ENCODE measurements at regions of chr9 and their contacts with region 1.

Region 1: GRCh38 chr9:3441197-3441816 is 84.5 kb downstream of the RFX3 start:
- DNase-seq: peak; percentile 76
- H3K4me3 Mint-ChIP-seq: no peak overlapping the region
- H3K27ac Mint-ChIP-seq: no peak overlapping the region
- H3K4me1 Mint-ChIP-seq: peaks cover 9% of the 10 kb centered on the region
- H3K27me3 Mint-ChIP-seq: no peaks in the 10 kb centered on the region

Region 2: GRCh38 chr9:2857564-2858198 is 583.6 kb before region 1 on chr9:
- CTCF ChIA-PET with region 1: interaction called, 5 read pairs
- intact Hi-C with region 1: loop called (anchors 5 kb)
- DNase-seq: peak; percentile 84
- H3K4me3 Mint-ChIP-seq: no peak overlapping the region
- H3K27ac Mint-ChIP-seq: no peak overlapping the region
- H3K4me1 Mint-ChIP-seq: peaks cover 6% of the 10 kb centered on the region
- H3K27me3 Mint-ChIP-seq: peaks cover 18% of the 10 kb centered on the region

Region 3: GRCh38 chr9:2872257-2872935 is 568.9 kb before region 1 on chr9:
- CTCF ChIA-PET with region 1: no interaction called
- intact Hi-C with region 1: loop called (anchors 5 kb)
- DNase-seq: peak; percentile 16
- H3K4me3 Mint-ChIP-seq: no peak overlapping the region
- H3K27ac Mint-ChIP-seq: no peak overlapping the region
- H3K4me1 Mint-ChIP-seq: peaks cover 18% of the 10 kb centered on the region
- H3K27me3 Mint-ChIP-seq: no peaks in the 10 kb centered on the region

Region 4: DNA sequence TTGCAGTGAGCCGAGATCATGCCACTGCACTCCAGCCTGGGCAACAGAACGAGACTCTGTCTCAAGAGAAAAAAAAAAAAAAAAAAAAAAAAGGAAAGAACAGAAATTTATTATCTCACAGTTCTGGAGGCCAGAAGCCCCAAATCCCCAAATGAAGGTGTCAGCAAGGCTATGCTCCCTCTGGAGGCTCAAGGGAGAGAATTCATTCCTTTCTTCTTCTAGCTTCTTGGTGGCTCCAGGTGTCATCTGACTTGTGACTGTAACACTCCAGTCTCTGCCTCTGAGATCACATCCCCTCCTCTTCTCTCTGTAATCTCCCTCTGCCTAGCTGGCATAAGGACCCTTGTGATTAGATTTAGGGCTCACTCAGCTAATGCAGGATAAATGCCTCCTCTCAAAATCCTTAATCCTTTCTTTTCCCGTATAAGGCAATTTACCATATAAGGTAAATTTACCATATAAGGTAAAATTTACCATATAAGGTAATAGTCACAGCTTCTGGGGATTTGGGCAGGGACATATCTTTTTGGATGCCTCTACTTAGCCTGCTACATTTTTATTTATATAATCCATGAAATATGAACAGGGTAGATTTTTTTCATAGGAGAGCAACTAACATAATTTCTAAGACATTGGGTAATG is 279.5 kb before region 1 on chr9:
- CTCF ChIA-PET with region 1: no interaction called
- intact Hi-C with region 1: no loop called
- DNase-seq: no peak
- H3K4me3 Mint-ChIP-seq: no peak overlapping the region
- H3K27ac Mint-ChIP-seq: no peak overlapping the region
- H3K4me1 Mint-ChIP-seq: no peaks in the 10 kb centered on the region
- H3K27me3 Mint-ChIP-seq: peaks cover 11% of the 10 kb centered on the region

Region 5: DNA sequence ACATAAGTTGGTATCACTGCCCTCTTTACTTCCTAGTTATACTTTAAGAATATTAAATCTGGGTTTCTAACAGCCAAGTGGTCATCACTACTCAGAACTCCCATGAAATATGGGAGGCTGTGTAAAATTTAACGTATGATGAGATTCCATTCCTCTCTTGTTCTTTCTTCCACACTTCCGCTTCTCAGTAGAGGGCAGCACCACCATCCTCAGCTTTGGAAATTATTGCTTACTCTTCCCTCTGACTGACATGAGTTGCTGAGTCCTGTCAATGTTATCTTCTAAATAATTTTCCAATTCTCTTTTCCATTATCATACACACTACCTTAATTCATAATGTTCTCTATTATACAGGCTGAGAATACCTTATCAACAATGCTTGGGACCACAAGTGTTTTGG is 109.5 kb before region 1 on chr9:
- CTCF ChIA-PET with region 1: interaction called, 39 read pairs
- intact Hi-C with region 1: loop called (anchors 1 kb)
- DNase-seq: peak; percentile 49
- H3K4me3 Mint-ChIP-seq: no peak overlapping the region
- H3K27ac Mint-ChIP-seq: no peak overlapping the region
- H3K4me1 Mint-ChIP-seq: peaks cover 1% of the 10 kb centered on the region
- H3K27me3 Mint-ChIP-seq: no peaks in the 10 kb centered on the region

Region 6: DNA sequence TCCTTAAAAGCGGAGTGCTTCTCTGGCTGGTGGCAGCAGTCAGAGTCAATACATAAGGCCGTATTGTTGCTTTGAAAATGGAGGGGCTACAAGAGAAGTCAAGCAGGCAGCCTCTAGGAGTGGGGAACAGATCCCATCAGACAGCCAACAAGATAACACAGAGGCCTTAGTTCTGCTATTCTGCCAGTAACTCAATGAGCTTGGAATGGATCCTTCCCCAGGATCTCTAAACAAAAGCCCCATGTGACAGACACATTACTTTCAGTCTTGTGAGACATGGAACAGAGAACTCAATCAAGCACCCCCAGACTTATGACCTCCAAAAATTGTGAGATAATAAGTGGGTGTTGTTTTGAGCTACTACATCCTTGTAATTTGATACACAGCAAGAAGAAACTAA is 74.1 kb before region 1 on chr9:
- CTCF ChIA-PET with region 1: no interaction called
- intact Hi-C with region 1: no loop called
- DNase-seq: no peak
- H3K4me3 Mint-ChIP-seq: no peak overlapping the region
- H3K27ac Mint-ChIP-seq: no peak overlapping the region
- H3K4me1 Mint-ChIP-seq: peaks cover 20% of the 10 kb centered on the region
- H3K27me3 Mint-ChIP-seq: no peaks in the 10 kb centered on the region

Region 7: DNA sequence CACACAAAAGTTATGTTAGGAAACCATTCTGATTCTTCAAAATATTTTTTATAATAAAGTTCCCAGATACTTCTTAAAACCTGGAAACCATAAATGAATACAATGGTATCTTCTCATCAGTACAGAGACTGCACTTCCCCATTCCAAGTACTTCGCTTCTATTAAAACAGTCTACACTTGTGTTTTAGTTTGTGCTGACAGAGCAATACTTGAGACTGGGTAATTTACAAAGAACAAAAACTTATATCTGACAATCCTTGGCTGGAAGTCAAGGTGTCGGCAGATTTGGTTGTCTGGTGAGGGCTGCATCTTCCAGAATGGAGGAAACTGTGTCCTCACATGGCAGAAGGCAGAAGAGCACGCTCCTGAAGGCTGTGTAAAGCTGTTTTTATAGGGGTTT is 14.4 kb after region 1 on chr9:
- CTCF ChIA-PET with region 1: interaction called, 10 read pairs
- intact Hi-C with region 1: no loop called
- DNase-seq: no peak
- H3K4me3 Mint-ChIP-seq: no peak overlapping the region
- H3K27ac Mint-ChIP-seq: no peak overlapping the region
- H3K4me1 Mint-ChIP-seq: peaks cover 3% of the 10 kb centered on the region
- H3K27me3 Mint-ChIP-seq: no peaks in the 10 kb centered on the region

Region 8: DNA sequence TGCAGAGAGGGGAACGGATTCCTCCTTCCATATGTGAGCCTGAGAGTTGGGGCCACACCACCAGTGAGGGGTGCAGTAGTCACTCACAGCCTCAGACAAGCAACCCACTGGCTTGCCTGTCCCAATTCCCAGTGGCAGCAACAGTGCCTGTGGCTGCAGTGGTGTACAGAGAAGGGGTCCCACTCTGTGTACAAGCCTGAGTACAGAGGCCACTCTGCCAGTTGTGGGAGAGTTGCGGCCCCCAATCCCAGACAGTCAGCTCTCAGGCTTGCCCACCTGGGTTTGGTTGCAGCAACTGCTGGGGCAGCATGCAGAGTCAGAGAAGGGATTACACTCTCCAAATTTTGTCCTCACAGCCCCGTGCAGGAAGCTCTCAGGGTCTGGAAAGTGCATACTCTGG is 217.7 kb after region 1 on chr9:
- CTCF ChIA-PET with region 1: no interaction called
- intact Hi-C with region 1: no loop called
- DNase-seq: no peak
- H3K4me3 Mint-ChIP-seq: no peak overlapping the region
- H3K27ac Mint-ChIP-seq: no peak overlapping the region
- H3K4me1 Mint-ChIP-seq: no peaks in the 10 kb centered on the region
- H3K27me3 Mint-ChIP-seq: no peaks in the 10 kb centered on the region

Region 9: GRCh38 chr9:3948826-3949556 is 507.7 kb after region 1 on chr9:
- CTCF ChIA-PET with region 1: no interaction called
- intact Hi-C with region 1: no loop called
- DNase-seq: no peak
- H3K4me3 Mint-ChIP-seq: no peak overlapping the region
- H3K27ac Mint-ChIP-seq: no peak overlapping the region
- H3K4me1 Mint-ChIP-seq: peaks cover 1% of the 10 kb centered on the region
- H3K27me3 Mint-ChIP-seq: peaks cover 7% of the 10 kb centered on the region

Measured in activated naive CD4-positive, alpha-beta T cell treated with anti-CD3 and anti-CD28 coated beads for 36 hours (primary cell).